ENCODE measurements at regions of chr4 and their contacts with region 1.

Region 1: DNA sequence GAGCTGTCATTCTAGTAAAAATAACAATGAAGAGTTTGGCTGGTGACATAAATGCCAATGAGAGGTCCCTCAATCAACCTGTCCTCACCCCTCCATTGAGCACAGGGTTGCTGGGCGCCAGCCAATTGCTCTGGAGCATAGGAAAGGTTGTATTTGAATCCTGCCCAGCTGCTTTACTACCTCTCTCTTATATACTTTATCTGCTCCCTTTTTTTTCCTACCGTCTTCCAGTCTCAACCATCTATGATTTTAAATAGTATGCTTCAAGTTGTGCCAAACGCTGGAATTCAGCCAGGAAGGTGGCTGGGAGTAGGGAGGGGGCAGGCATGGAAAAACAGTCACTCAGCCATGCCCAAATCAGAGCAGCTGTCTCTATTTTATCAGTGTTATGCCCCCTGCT is 153.8 kb downstream of the NR3C2 start:
- DNase-seq: no peak
- ATAC-seq: peak in 3 of 4 donors; percentile 14 to 48 (median 21)
- H3K4me3 ChIP-seq: no peak overlapping the region
- H3K27ac ChIP-seq: peak overlapping the region; percentile 20
- H3K4me1 ChIP-seq: peaks cover 26% of the 10 kb centered on the region
- H3K27me3 ChIP-seq: no peaks in the 10 kb centered on the region
- CTCF ChIP-seq: no peak

Region 2: GRCh38 chr4:148216866-148217814 is 71.3 kb before region 1 on chr4:
- intact Hi-C with region 1: no loop called
- DNase-seq: no peak
- ATAC-seq: no peak
- H3K4me3 ChIP-seq: peak overlapping the region; percentile 54
- H3K27ac ChIP-seq: peak overlapping the region; percentile 43
- H3K4me1 ChIP-seq: peaks cover 19% of the 10 kb centered on the region
- H3K27me3 ChIP-seq: no peaks in the 10 kb centered on the region
- CTCF ChIP-seq: no peak

Region 3: GRCh38 chr4:148300877-148301276 is 12.4 kb after region 1 on chr4:
- intact Hi-C with region 1: loop called in 1 of 2 experiments (anchors 1 kb)
- DNase-seq: no peak
- ATAC-seq: no peak
- H3K4me3 ChIP-seq: no peak overlapping the region
- H3K27ac ChIP-seq: no peak overlapping the region
- H3K4me1 ChIP-seq: peaks cover 6% of the 10 kb centered on the region
- H3K27me3 ChIP-seq: no peaks in the 10 kb centered on the region
- CTCF ChIP-seq: no peak

Region 4: DNA sequence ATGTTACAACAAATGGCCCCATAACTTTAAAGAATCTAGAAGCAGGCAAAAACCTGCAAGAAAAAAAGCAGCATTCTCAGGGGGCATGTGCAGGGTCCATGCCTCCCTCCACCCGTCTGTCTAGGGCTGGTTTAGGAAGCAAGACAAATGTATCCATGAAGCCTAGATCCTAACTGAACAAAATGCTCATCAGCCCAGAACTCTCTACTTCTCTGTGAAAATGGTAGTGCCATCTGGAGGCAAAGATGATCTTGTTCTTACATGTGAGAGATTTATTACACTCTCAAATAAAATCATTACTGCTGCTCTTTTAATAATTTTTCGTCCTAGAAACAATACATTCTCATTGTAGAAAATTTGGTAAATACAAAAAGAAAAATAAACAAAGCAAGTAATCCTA is 127.1 kb after region 1 on chr4:
- intact Hi-C with region 1: loop called in 1 of 2 experiments (anchors 10 kb)
- DNase-seq: no peak
- ATAC-seq: peak in 1 of 4 donors; percentile 57
- H3K4me3 ChIP-seq: no peak overlapping the region
- H3K27ac ChIP-seq: no peak overlapping the region
- H3K4me1 ChIP-seq: peaks cover 10% of the 10 kb centered on the region
- H3K27me3 ChIP-seq: no peaks in the 10 kb centered on the region
- CTCF ChIP-seq: no peak

Measured in psoas muscle (tissue), 8 donors.